ENCODE measurements at regions of chr7 and their contacts with region 1.

Region 1: GRCh38 chr7:6482743-6483119 is 35.0 kb upstream of the DAGLB start:
- DNase-seq: no peak
- ATAC-seq: no peak
- H3K4me3 ChIP-seq: peak overlapping the region; percentile 100
- H3K27ac ChIP-seq: peak overlapping the region; percentile 66; the same call in 1 of the 2 replicates
- H3K4me1 ChIP-seq: peaks cover 32% of the 10 kb centered on the region
- H3K27me3 ChIP-seq: no peaks in the 10 kb centered on the region
- CTCF ChIP-seq: no peak

Region 2: GRCh38 chr7:6658618-6659341 is 176.0 kb after region 1 on chr7:
- CTCF ChIA-PET with region 1: no interaction called
- POLR2A ChIA-PET with region 1: interaction called, 38 read pairs
- intact Hi-C with region 1: no loop called
- DNase-seq: no peak
- ATAC-seq: peak; percentile 20
- H3K4me3 ChIP-seq: no peak overlapping the region
- H3K27ac ChIP-seq: no peak overlapping the region
- H3K4me1 ChIP-seq: no peaks in the 10 kb centered on the region
- H3K27me3 ChIP-seq: no peaks in the 10 kb centered on the region
- CTCF ChIP-seq: no peak